Activated T-helper 2 cell treated with anti-CD3 and anti-CD28 coated beads, Interferon-gamma antibody, Interleukin-2, Interleukin-4, amounts not matched to agents 10 μg/mL and 5 μg/mL and 100 μg/mL, durations not matched to agents 14 hours and 24 hours and 36 hours (primary cell): ENCODE measurements at regions of chr1 and their contacts with region 1.

Region 1: DNA sequence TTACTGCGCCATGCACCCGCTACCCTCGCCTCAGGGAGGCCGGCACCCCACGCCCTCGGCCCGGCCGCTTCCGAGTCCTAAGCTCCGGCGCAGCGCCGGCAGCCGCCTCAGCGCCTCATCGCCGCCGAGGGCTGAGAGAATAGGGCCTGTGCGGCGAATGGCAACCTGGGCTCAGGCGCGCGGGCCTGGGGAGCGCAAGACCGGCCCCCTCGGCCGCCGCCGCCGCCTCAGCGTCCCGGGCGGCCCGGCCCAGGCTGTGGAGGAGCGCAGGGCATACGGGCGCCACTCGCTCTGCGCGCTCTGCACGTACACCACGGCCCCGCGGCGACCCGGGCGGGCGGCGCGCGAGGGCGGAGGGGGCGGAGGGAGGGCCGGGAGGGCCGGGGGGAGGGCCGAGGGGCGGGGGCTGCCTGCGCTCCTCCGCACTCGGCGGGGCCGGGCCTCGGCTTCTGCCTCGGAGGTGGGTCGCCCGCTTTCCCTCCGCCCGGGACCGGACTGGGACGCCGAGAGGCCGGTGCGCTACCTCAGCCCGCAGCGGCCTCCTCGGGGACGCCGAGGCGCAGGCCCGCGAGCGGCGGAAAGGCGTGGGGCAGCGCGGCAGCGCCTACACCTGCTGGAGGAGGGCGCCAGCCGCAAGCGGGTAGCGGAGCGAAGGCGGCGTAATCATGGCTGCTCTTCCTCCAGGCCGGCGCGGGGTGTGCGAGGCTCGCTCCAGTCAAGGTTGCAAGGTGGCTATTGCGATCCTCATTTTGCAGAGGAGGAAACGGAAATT is at the start of gene EGLN1:
- DNase-seq: peak; percentile 80
- H3K4me3 Mint-ChIP-seq: peak within 1 kb of the TSS; percentile 90
- H3K27ac Mint-ChIP-seq: peak within 1 kb of the TSS; percentile 83
- H3K4me1 Mint-ChIP-seq: peaks cover 41% of the 10 kb centered on the region
- H3K27me3 Mint-ChIP-seq: peaks cover 32% of the 10 kb centered on the region
- total RNA-seq, gene EGLN1: 20.2 and 24.4 TPM in 2 replicates

Region 2: DNA sequence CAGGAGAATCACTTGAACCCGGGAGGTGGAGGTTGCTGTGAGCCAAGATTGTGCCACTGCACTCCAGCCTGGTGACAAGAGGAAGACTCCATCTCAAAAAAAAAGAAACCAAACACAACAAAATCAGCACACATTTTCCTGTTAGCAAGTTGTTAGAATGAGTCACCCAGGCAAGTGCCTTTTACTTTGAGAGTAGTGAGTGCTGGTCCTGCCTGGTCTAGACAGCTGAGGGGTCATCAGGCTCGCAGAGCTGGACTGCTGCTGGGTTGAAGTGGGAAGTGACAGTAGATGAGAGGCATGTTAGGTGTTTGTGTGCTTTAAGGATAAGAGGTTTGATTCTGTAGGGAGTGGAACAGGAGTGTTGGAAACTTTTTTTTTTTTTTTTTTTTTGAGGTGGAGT is 149.3 kb before region 1 on chr1:
- intact Hi-C with region 1: loop called (anchors 5 kb)
- DNase-seq: peak; percentile 16
- H3K4me3 Mint-ChIP-seq: peak overlapping the region; percentile 71
- H3K27ac Mint-ChIP-seq: peak overlapping the region; percentile 99
- H3K4me1 Mint-ChIP-seq: peaks cover 36% of the 10 kb centered on the region
- H3K27me3 Mint-ChIP-seq: no peaks in the 10 kb centered on the region

Region 3: GRCh38 chr1:231357831-231358354 is 64.3 kb before region 1 on chr1:
- intact Hi-C with region 1: loop called (anchors 5 kb)
- DNase-seq: no peak
- H3K4me3 Mint-ChIP-seq: no peak overlapping the region
- H3K27ac Mint-ChIP-seq: no peak overlapping the region
- H3K4me1 Mint-ChIP-seq: peaks cover 8% of the 10 kb centered on the region
- H3K27me3 Mint-ChIP-seq: no peaks in the 10 kb centered on the region

Region 4: DNA sequence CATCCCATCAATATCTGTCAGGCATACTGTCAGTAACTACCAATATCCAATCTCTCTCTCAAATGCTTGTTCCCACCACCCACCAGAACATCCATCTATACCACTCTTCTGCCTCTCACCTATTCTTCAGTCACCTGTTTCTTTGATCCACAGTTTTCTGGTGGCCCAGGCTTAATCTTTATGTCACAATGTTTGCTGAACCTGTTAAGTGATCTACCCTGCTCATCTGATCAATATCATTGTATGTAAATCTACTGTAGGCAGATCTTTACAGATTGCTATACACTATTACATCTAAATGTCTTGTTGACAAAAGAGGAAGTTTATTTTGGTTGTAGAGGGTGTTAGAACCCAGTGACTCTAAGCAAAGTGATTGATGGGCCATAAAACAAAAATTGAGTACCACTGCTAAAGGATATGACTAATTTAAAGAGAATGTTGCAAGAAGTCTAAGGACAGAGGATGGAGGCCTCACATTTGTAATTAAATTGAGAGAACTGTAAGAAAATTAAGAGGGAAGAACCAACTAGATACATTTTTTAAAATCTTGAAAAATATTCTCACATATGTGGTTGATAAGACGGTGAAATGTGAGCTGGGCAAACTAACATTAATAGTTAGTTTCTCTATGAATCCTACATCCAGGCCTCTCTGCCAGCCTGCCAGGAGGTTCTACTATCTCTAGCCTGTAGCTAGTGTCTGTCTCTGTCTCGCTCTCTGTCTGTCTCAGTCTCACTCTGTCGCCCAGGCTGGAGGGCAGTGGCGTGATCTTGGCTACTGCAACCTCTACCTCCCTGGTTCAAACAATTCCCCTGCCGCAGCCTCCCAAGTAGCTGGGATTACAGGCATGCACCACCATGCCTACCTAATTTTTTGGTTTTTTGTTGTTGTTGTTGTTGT is 34.2 kb before region 1 on chr1:
- intact Hi-C with region 1: no loop called
- DNase-seq: no peak
- H3K4me3 Mint-ChIP-seq: no peak overlapping the region
- H3K27ac Mint-ChIP-seq: peak overlapping the region; percentile 31
- H3K4me1 Mint-ChIP-seq: peaks cover 25% of the 10 kb centered on the region
- H3K27me3 Mint-ChIP-seq: no peaks in the 10 kb centered on the region

Region 5: DNA sequence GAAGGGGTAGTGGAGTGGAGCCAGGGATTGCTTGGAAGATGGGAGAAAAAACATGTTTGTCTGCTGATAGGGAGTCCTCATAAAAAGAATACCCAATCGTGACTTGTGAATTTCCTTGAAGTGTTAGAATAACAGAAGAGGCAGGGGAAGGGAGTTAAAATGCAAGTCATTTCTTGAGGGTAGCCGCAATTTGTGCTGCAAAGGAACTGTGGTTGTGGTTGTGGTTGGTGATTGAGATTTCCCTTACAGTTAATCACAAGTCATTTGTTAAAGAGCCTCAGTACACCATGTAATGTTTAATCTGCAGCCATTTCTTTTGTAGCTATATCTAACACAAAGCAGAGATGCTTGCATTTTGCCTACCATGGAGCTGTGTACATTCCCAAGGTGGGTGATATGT is 38.4 kb after region 1 on chr1:
- intact Hi-C with region 1: loop called (anchors 2 kb)
- DNase-seq: peak; percentile 71
- H3K4me3 Mint-ChIP-seq: no peak overlapping the region
- H3K27ac Mint-ChIP-seq: no peak overlapping the region
- H3K4me1 Mint-ChIP-seq: peaks cover 35% of the 10 kb centered on the region
- H3K27me3 Mint-ChIP-seq: peaks cover 61% of the 10 kb centered on the region

Region 6: GRCh38 chr1:231603598-231604275 is 181.6 kb after region 1 on chr1:
- intact Hi-C with region 1: loop called (anchors 5 kb)
- DNase-seq: peak; percentile 34
- H3K4me3 Mint-ChIP-seq: peak overlapping the region; percentile 87
- H3K27ac Mint-ChIP-seq: peak overlapping the region; percentile 69
- H3K4me1 Mint-ChIP-seq: peaks cover 8% of the 10 kb centered on the region
- H3K27me3 Mint-ChIP-seq: peaks cover 27% of the 10 kb centered on the region